ENCODE measurements at regions of chr3 and their contacts with region 1.

Region 1: DNA sequence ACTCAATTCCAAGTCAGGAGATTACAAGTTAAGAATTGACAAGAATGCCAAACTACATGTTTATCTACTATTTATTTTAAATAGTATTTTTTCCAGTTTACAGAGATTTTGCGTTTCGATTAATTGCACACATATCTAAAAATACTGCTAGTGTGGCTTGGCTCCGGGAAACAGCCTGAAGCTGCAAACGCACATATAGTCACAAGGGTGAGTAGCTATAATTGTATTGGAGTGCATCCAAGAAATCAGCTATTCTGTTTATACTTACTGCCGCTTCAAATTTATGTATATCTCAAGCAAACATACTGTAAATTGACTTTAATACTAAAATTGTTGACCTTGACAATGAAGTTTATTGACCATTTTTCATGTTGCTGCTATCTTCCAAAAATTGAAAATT is 77.0 kb upstream of the PLSCR5 start:
- DNase-seq: no peak
- H3K4me3 ChIP-seq: no peak overlapping the region
- H3K27ac ChIP-seq: no peak overlapping the region
- H3K4me1 ChIP-seq: no peaks in the 10 kb centered on the region
- H3K27me3 ChIP-seq: no peaks in the 10 kb centered on the region
- CTCF ChIP-seq: no peak

Region 2: DNA sequence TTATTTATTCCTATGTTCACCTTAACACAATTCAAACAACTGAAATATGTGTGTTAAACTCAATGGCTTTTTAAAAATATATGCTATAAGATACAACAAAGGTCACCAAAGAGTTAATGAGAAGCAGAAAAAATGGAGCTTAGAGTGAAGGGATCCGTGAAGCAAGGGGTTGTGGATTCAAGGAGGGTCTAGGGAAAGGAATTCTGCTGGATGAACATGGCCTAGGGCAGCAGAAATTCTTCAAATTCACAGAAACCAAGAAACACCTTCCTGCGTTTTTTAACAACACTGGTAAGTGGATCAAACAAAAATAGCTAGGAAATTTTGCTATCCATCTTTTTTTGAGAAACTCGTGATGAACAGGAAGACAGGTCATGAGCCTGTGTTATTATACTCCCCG is 17.8 kb before region 1 on chr3:
- CTCF ChIA-PET with region 1: no interaction called
- POLR2A ChIA-PET with region 1: no interaction called
- intact Hi-C with region 1: loop called (anchors 1 kb)
- DNase-seq: no peak
- H3K4me3 ChIP-seq: no peak overlapping the region
- H3K27ac ChIP-seq: no peak overlapping the region
- H3K4me1 ChIP-seq: no peaks in the 10 kb centered on the region
- H3K27me3 ChIP-seq: no peaks in the 10 kb centered on the region
- CTCF ChIP-seq: no peak

Region 3: DNA sequence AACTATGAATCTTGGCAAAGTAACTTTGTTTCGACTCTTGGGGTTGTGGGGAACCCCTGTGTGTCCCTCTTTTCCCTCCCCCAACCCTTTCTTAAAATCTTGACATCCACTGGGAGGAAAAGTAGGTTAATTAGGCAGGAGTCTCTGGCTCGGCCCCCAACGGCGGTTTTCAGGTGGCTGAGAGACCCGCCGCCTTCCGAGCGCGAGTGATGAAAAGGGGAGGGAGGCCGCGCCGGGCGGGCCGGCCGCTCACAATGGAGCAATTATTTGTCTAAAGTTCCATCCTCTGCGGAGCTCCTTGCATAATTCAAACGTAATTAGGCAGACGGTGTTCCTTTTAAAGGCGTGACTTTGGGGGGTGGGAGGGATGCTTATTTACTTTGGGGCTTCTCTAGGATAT is 672.5 kb after region 1 on chr3:
- CTCF ChIA-PET with region 1: no interaction called
- POLR2A ChIA-PET with region 1: interaction called, 21 read pairs
- intact Hi-C with region 1: no loop called
- DNase-seq: no peak
- H3K4me3 ChIP-seq: no peak overlapping the region
- H3K27ac ChIP-seq: no peak overlapping the region
- H3K4me1 ChIP-seq: no peaks in the 10 kb centered on the region
- H3K27me3 ChIP-seq: no peaks in the 10 kb centered on the region
- CTCF ChIP-seq: no peak

Measured in PC-9 (cell line).